Activated T-helper 2 cell treated with anti-CD3 and anti-CD28 coated beads, Interferon-gamma antibody, Interleukin-2, Interleukin-4, amounts not matched to agents 10 μg/mL and 5 μg/mL and 100 μg/mL, durations not matched to agents 14 hours and 24 hours and 36 hours (primary cell): ENCODE measurements at regions of chr13 and their contacts with region 1.

Region 1: GRCh38 chr13:97359181-97360057 is 74.5 kb upstream of the RAP2A start:
- DNase-seq: peak; percentile 19
- H3K4me3 Mint-ChIP-seq: no peak overlapping the region
- H3K27ac Mint-ChIP-seq: no peak overlapping the region
- H3K4me1 Mint-ChIP-seq: no peaks in the 10 kb centered on the region
- H3K27me3 Mint-ChIP-seq: no peaks in the 10 kb centered on the region

Region 2: GRCh38 chr13:96984051-96984508 is 375.3 kb before region 1 on chr13:
- intact Hi-C with region 1: no loop called
- DNase-seq: no peak
- H3K4me3 Mint-ChIP-seq: no peak overlapping the region
- H3K27ac Mint-ChIP-seq: no peak overlapping the region
- H3K4me1 Mint-ChIP-seq: no peaks in the 10 kb centered on the region
- H3K27me3 Mint-ChIP-seq: no peaks in the 10 kb centered on the region

Region 3: GRCh38 chr13:97018029-97018831 is 341.2 kb before region 1 on chr13:
- intact Hi-C with region 1: loop called (anchors 5 kb)
- DNase-seq: no peak
- H3K4me3 Mint-ChIP-seq: no peak overlapping the region
- H3K27ac Mint-ChIP-seq: no peak overlapping the region
- H3K4me1 Mint-ChIP-seq: peaks cover 6% of the 10 kb centered on the region
- H3K27me3 Mint-ChIP-seq: peaks cover 35% of the 10 kb centered on the region

Region 4: GRCh38 chr13:97030705-97031452 is 328.5 kb before region 1 on chr13:
- intact Hi-C with region 1: loop called (anchors 5 kb)
- DNase-seq: no peak
- H3K4me3 Mint-ChIP-seq: no peak overlapping the region
- H3K27ac Mint-ChIP-seq: no peak overlapping the region
- H3K4me1 Mint-ChIP-seq: no peaks in the 10 kb centered on the region
- H3K27me3 Mint-ChIP-seq: peaks cover 2% of the 10 kb centered on the region

Region 5: GRCh38 chr13:97109841-97110492 is 249.5 kb before region 1 on chr13:
- intact Hi-C with region 1: loop called (anchors 1 kb)
- DNase-seq: peak; percentile 75
- H3K4me3 Mint-ChIP-seq: no peak overlapping the region
- H3K27ac Mint-ChIP-seq: no peak overlapping the region
- H3K4me1 Mint-ChIP-seq: peaks cover 9% of the 10 kb centered on the region
- H3K27me3 Mint-ChIP-seq: peaks cover 46% of the 10 kb centered on the region

Region 6: DNA sequence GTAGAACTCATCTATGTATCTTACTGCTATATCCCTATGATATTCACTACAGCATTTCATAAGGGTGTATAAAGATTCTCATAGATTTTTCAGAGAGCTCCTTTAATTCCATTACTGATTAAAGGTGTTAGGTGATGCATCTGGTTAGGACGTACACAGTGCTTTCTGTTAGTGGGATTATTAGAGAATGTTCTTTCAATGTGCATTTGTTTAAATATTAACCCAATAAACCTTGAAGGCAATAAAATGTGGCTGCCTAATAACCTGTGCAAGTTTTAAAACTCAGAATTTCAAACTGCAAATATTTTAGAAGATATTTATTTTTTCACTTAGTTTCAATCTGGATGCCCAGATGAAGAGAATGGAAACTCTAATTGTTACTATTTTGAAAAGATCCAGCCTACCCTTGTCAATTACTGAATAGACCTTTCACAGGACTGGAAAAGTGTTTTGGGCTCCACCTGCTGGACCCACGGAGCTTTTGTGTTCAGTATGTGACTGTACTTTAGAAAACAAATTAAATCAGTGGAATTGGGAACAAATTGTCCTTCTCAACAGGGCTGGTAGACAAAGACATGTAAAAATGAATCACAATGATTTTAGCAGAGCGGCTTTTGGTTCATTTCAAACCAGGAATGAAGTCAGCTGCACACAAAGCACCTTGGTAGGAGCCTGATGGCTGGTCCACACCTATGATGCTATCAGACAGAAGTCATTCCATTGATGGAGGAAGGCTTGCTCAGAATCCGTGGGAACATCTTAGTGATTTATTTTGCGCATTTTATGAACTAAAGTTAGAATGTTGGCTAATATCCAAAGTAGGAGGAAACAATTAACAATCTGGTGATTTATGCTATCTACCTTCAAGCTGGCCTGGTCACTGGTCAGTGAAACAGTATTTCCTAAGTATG is 14.9 kb before region 1 on chr13:
- intact Hi-C with region 1: loop called (anchors 1 kb)
- DNase-seq: no peak
- H3K4me3 Mint-ChIP-seq: no peak overlapping the region
- H3K27ac Mint-ChIP-seq: no peak overlapping the region
- H3K4me1 Mint-ChIP-seq: peaks cover 3% of the 10 kb centered on the region
- H3K27me3 Mint-ChIP-seq: no peaks in the 10 kb centered on the region